GM12878 (cell line): ENCODE measurements at regions of chr18 and their contacts with region 1.

Region 1: DNA sequence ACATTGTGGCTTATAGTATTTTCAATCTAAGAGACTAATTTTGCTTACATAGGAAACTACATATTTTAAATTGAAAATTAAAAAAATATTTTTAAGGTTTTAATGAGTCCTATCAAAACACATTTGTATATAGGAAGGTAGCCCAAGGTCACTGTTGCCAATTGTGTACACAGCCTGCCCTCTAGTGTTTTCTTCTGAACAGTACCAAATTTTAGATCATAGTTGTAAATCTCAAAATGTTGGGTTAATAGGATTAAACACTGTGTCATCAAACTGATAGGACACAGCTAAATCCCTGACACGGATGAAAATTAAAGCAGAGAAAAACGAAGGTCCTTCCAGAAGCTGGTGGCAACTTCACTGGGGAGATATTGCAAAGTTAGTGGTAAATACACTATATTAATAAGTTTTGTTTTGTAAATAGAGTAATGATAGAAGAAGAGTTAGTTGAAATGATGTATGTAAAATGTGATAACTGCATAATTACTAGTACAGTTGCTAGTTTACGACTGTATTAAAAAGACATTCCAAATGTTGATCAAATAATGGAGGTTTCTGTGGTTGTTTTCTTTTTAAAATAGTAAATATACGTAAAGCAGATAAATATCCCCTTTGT is 19.7 kb downstream of the CLUL1 start:
- DNase-seq: no peak
- ATAC-seq: peak; percentile 72
- H3K4me3 ChIP-seq: no peak overlapping the region
- H3K27ac ChIP-seq: no peak overlapping the region
- H3K4me1 ChIP-seq: no peaks in the 10 kb centered on the region
- H3K27me3 ChIP-seq: no peaks in the 10 kb centered on the region
- CTCF ChIP-seq: peak; percentile 49 to 58 (median 52); a peak in 5 of 6 replicates
- EP300 ChIP-seq: no peak
- POLR2A ChIP-seq: no peak
- RAD21 ChIP-seq: peak; percentile 79

Region 2: DNA sequence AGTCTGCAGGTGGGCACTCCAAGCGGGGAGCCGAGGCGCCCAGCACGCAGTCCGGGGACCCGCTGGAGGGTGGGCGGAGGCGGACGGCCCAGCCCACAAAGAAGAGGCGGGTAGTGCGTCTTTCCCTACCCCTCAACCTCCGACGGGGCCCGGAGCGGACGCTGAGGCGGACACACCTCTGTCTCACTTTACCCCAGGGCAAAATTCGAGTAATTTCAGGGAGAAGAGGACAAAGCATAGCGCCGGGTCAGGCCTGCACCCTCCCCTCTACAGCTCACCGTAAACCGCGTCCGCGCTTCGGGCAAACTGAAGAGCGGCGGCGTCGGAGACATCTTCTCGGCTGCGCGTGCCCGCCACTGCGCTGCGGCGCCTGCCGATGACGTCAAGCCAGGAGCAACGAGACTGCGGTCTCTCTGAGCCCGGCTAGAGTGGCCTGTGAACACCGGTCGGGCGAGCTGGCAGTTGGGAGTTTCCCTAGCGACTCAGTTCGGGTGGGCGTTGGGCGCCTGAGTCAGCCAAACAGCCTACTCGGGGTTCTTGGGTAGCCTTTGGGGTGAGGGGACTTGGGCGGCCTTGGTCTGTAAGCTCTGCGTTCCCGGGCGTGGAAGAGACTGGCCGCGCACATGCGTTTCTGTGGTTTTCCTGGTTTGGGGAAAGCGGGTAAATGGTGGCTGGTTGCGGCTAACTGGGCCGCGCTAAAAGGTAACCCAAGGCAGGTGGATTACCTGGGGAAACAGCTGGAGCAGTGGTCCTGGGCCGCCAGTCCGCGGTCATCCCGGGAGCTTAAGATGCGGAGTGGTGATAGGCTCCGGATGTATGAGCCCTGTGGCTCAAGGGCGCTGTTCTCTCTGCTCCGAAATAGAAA is 348.6 kb before region 1 on chr18 and contains the start of gene THOC1:
- CTCF ChIA-PET with region 1: interaction called, 4 read pairs
- POLR2A ChIA-PET with region 1: no interaction called
- RAD21 ChIA-PET with region 1: no interaction called
- SMC1A ChIA-PET with region 1: interaction called, 4 read pairs
- in situ Hi-C with region 1: no loop called
- intact Hi-C with region 1: loop called (anchors 5 kb)
- DNase-seq: peak; percentile 70
- ATAC-seq: peak; percentile 93
- H3K4me3 ChIP-seq: peak within 1 kb of the TSS; percentile 95
- H3K27ac ChIP-seq: peak within 1 kb of the TSS; percentile 97
- H3K4me1 ChIP-seq: no peaks in the 10 kb centered on the region; the same call in 1 of the 2 replicates
- H3K27me3 ChIP-seq: no peaks in the 10 kb centered on the region
- CTCF ChIP-seq: no peak
- EP300 ChIP-seq: peak; percentile 50 to 54; a peak in 1 of 4 replicates
- POLR2A ChIP-seq: peak; percentile 98
- RAD21 ChIP-seq: no peak
- polyA plus RNA-seq, gene THOC1: 35.5 to 38.5 TPM

Region 3: DNA sequence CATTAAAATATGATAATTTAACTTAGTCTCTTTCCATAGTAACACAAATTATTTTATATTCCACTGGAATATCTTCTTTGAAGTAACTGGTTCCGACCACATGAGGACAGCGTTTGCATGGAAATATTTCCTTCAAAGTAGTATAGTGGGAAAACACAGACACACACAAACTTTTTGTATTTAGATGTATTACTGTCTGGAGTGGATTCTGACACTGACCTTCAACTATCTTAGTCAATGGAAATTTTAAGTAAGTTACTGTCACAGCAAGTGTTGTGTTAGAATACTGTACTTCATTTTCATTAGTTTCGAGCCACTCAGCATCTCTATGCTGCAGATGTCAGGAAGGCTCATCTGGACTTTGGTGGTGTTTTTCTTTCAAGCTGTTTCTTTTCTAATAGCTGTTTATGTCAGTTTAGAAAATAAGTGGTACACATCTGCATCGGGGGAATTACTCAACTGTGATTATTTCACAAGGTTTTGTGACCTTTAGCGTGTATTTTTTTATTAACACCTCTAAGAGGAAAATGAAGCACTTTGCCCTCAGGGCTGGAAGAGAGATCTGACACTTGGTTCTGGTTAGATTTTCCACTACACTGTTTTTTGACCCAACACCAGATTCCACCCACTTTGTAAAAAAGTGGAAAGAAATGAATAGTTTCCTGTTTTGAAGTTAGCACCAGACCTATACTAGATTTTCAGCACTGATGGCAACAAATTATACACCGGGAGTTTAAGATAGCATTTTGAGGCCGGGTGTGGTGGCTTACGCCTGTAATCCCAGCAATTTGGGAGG is 329.8 kb before region 1 on chr18:
- CTCF ChIA-PET with region 1: interaction called, 5 read pairs
- POLR2A ChIA-PET with region 1: no interaction called
- RAD21 ChIA-PET with region 1: no interaction called
- SMC1A ChIA-PET with region 1: interaction called, 3 read pairs
- in situ Hi-C with region 1: loop called (anchors 10 kb)
- intact Hi-C with region 1: loop called (anchors 5 kb)
- DNase-seq: no peak
- ATAC-seq: no peak
- H3K4me3 ChIP-seq: no peak overlapping the region
- H3K27ac ChIP-seq: no peak overlapping the region
- H3K4me1 ChIP-seq: no peaks in the 10 kb centered on the region
- H3K27me3 ChIP-seq: no peaks in the 10 kb centered on the region
- CTCF ChIP-seq: peak; percentile 6 to 34 (median 19); a peak in 3 of 6 replicates
- EP300 ChIP-seq: no peak
- POLR2A ChIP-seq: no peak
- RAD21 ChIP-seq: peak; percentile 43

Region 4: DNA sequence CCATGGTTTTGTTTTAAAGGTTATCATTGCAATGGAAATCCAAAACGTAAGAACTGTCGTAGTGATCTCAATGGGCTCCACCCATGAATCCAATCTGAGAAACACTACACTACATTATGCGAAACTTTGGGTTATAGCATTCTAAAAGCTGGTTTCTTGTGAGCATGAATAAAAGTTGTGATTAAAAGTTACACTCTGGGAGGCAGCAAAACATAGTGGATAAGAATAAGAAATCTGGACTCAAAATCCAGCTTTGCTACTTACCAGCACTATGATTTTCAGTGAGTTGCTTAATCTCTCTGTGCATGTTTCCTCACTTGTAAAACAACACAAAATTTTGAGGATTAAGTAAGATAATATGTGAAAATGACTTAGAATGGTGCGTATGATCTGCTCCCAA is 323.0 kb before region 1 on chr18:
- CTCF ChIA-PET with region 1: interaction called, 3 read pairs
- POLR2A ChIA-PET with region 1: no interaction called
- RAD21 ChIA-PET with region 1: interaction called, 3 read pairs
- SMC1A ChIA-PET with region 1: interaction called, 3 read pairs
- in situ Hi-C with region 1: loop called (anchors 10 kb)
- intact Hi-C with region 1: loop called (anchors 5 kb)
- DNase-seq: no peak
- ATAC-seq: no peak
- H3K4me3 ChIP-seq: no peak overlapping the region
- H3K27ac ChIP-seq: no peak overlapping the region
- H3K4me1 ChIP-seq: no peaks in the 10 kb centered on the region
- H3K27me3 ChIP-seq: no peaks in the 10 kb centered on the region
- CTCF ChIP-seq: no peak
- EP300 ChIP-seq: no peak
- POLR2A ChIP-seq: no peak
- RAD21 ChIP-seq: no peak

Region 5: DNA sequence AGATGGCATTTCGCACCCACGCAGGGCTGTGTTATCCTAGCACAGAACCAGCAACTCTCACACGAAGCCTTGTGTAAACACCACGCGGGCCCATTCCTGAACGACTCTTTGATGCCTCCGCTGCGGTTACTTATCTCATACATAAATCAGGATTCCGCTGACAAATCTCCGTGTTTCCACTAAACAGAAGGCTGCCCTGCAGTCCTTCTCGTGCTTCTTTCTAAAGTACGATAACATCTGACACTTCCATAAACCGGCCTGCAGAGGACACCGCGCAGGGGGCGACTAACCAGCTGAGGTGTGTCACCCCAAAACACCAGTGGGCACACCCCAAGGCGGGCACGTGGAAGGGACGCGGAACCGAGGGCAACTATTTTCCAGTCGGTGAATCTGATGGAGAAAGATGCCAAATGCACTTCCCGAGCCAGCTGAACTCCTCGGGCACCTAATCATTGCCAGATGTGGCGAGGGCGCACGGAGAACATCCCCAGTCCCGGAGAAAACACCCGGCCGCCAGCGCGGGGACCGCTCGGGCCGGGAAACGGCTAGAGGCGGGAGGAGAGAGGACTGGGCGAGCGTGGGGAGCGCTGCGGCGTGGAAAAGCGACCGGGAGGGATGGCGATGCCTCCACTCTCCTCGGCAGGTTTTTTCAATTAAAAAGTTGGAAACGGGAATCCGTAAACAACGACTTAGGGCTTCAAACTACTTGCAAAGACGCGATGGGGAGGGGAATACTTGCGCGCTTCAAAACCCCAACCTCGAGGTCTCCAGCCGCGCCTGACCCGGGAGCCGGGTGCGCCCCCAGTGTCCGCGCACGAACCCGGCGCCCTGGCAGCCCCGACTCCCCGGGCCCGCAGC is 116.7 kb before region 1 on chr18:
- CTCF ChIA-PET with region 1: interaction called, 8 read pairs
- POLR2A ChIA-PET with region 1: no interaction called
- RAD21 ChIA-PET with region 1: interaction called, 5 read pairs
- SMC1A ChIA-PET with region 1: no interaction called
- in situ Hi-C with region 1: no loop called
- intact Hi-C with region 1: loop called (anchors 5 kb)
- DNase-seq: no peak
- ATAC-seq: no peak
- H3K4me3 ChIP-seq: no peak overlapping the region
- H3K27ac ChIP-seq: no peak overlapping the region
- H3K4me1 ChIP-seq: no peaks in the 10 kb centered on the region
- H3K27me3 ChIP-seq: peaks cover 5 to 10% of the 10 kb centered on the region in 2 experiments; a peak in 2 of 4 replicates
- CTCF ChIP-seq: no peak
- EP300 ChIP-seq: no peak
- POLR2A ChIP-seq: no peak
- RAD21 ChIP-seq: no peak

Region 6: DNA sequence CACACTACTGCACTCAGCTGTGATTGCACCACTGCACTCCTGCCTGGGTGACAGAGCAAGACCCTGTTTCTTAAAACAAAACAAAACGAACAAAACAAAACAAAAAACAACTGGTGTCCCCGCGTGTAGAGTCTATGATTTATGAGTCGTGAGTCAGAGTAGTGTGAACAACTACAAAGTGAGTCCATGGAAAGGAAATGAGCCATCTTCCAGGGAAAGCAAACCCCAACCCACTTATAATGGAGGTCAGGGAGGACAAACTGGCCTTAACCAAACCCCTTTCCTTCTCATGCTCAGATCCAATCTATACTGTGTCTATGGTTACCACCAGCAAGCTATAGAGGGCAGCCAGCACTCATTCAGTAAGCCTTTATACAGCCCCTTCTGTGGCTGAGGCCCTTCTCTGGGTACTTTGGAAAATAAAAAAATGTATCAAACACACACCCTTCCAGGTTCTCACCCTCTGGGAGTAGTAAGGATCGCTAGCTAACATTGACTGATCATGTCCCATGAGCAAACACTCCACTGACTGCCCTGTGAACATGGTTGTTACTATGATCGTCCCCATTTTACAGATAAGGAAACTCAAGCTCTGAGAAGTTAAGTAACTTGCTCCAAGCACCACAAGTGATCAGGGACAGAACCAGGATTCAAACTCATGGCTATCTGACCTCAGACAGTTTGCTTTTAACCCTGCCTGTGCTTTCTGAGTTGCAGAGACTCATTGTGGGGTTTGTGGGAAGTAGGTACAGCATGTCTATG is 91.3 kb before region 1 on chr18:
- CTCF ChIA-PET with region 1: interaction called, 8 read pairs
- POLR2A ChIA-PET with region 1: no interaction called
- RAD21 ChIA-PET with region 1: interaction called, 10 read pairs
- SMC1A ChIA-PET with region 1: interaction called, 3 read pairs
- in situ Hi-C with region 1: no loop called
- intact Hi-C with region 1: no loop called
- DNase-seq: no peak
- ATAC-seq: peak; percentile 61
- H3K4me3 ChIP-seq: no peak overlapping the region
- H3K27ac ChIP-seq: no peak overlapping the region
- H3K4me1 ChIP-seq: no peaks in the 10 kb centered on the region
- H3K27me3 ChIP-seq: no peaks in the 10 kb centered on the region
- CTCF ChIP-seq: no peak
- EP300 ChIP-seq: no peak
- POLR2A ChIP-seq: no peak
- RAD21 ChIP-seq: no peak

Region 7: GRCh38 chr18:577643-578375 is 38.7 kb before region 1 on chr18:
- CTCF ChIA-PET with region 1: no interaction called
- POLR2A ChIA-PET with region 1: no interaction called
- RAD21 ChIA-PET with region 1: no interaction called
- SMC1A ChIA-PET with region 1: no interaction called
- in situ Hi-C with region 1: no loop called
- intact Hi-C with region 1: no loop called
- DNase-seq: no peak
- ATAC-seq: no peak
- H3K4me3 ChIP-seq: no peak overlapping the region
- H3K27ac ChIP-seq: no peak overlapping the region
- H3K4me1 ChIP-seq: no peaks in the 10 kb centered on the region
- H3K27me3 ChIP-seq: peaks cover 0 to 2% of the 10 kb centered on the region in 2 experiments; a peak in 2 of 4 replicates
- CTCF ChIP-seq: no peak
- EP300 ChIP-seq: no peak
- POLR2A ChIP-seq: no peak
- RAD21 ChIP-seq: no peak

Region 8: GRCh38 chr18:777021-777420 is 160.5 kb after region 1 on chr18:
- CTCF ChIA-PET with region 1: no interaction called
- POLR2A ChIA-PET with region 1: no interaction called
- RAD21 ChIA-PET with region 1: no interaction called
- SMC1A ChIA-PET with region 1: no interaction called
- in situ Hi-C with region 1: no loop called
- intact Hi-C with region 1: no loop called
- DNase-seq: no peak
- ATAC-seq: no peak
- H3K4me3 ChIP-seq: no peak overlapping the region
- H3K27ac ChIP-seq: no peak overlapping the region
- H3K4me1 ChIP-seq: no peaks in the 10 kb centered on the region
- H3K27me3 ChIP-seq: no peaks in the 10 kb centered on the region
- CTCF ChIP-seq: no peak
- EP300 ChIP-seq: no peak
- POLR2A ChIP-seq: no peak
- RAD21 ChIP-seq: no peak

Region 9: GRCh38 chr18:839224-840022 is 222.9 kb after region 1 on chr18:
- CTCF ChIA-PET with region 1: interaction called, 251 read pairs
- POLR2A ChIA-PET with region 1: no interaction called
- RAD21 ChIA-PET with region 1: interaction called, 168 read pairs
- SMC1A ChIA-PET with region 1: interaction called, 188 read pairs
- in situ Hi-C with region 1: loop called (anchors 5 kb)
- intact Hi-C with region 1: no loop called
- DNase-seq: peak; percentile 25
- ATAC-seq: peak; percentile 100
- H3K4me3 ChIP-seq: no peak overlapping the region
- H3K27ac ChIP-seq: no peak overlapping the region
- H3K4me1 ChIP-seq: no peaks in the 10 kb centered on the region
- H3K27me3 ChIP-seq: no peaks in the 10 kb centered on the region
- CTCF ChIP-seq: peak; percentile 93 to 96 (median 96); a peak in 5 of 6 replicates
- EP300 ChIP-seq: no peak
- POLR2A ChIP-seq: no peak
- RAD21 ChIP-seq: peak; percentile 68